Heart left ventricle (tissue), 16 donors: ENCODE measurements at regions of chr9 and their contacts with region 1.

Region 1: GRCh38 chr9:138044485-138045383 is 167.2 kb downstream of the CACNA1B start:
- DNase-seq: peak in 2 of 5 donors; percentile 4 to 27
- ATAC-seq: no peak
- H3K4me3 ChIP-seq: no peak overlapping the region
- H3K27ac ChIP-seq: no peak overlapping the region
- H3K4me1 ChIP-seq: no peaks in the 10 kb centered on the region
- H3K27me3 ChIP-seq: peaks cover 0 to 8% (median 0%) of the 10 kb centered on the region in 9 donors
- CTCF ChIP-seq: no peak
- POLR2A ChIP-seq: no peak

Region 2: DNA sequence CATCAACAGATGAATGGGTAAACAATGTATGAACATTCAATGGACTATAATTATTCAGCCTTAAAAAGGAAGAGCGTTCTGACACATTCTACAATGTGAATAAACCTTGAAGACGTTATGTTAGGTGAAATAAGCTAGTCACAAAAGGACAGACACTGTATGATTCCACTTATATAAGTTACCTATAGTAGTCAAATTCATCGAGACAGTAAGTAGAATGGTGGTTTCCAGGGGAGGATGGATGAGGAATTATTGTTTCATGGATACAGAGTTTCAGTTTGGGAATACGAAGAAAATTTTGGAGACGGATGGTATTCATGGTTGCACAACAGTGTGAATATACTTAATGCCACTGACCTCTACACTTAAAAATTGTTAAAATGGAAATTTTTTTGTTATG is 49.3 kb after region 1 on chr9:
- intact Hi-C with region 1: loop called in 1 of 10 experiments (anchors 5 kb)
- DNase-seq: no peak
- ATAC-seq: no peak
- H3K4me3 ChIP-seq: no peak overlapping the region
- H3K27ac ChIP-seq: no peak overlapping the region
- H3K4me1 ChIP-seq: no peaks in the 10 kb centered on the region
- H3K27me3 ChIP-seq: no peaks in the 10 kb centered on the region
- CTCF ChIP-seq: no peak
- POLR2A ChIP-seq: no peak